A673 (cell line): ENCODE measurements at regions of chr12 and their contacts with region 1.

Region 1: DNA sequence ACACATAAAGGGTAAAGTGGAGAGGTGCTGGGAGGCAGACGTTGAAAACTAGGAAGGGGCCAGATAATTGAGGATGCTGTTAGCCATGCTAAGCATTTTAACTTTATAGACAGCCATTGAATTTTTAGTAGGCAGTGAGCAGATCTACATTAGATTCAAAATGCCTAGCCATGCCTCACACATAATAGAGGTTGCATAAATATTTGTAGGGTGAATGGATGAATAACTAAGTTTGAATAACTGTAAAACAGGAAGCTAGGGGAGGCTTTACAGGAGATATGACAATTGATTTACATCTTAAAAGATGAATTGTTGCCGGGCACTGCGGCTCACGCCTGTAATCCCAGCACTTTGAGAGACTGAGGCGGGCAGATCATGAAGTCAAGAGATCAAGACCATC is 12.3 kb upstream of the CCNT1 start:
- DNase-seq: no peak
- H3K4me3 ChIP-seq: no peak overlapping the region
- H3K27ac ChIP-seq: no peak overlapping the region
- H3K4me1 ChIP-seq: no peaks in the 10 kb centered on the region
- H3K27me3 ChIP-seq: no peaks in the 10 kb centered on the region
- CTCF ChIP-seq: no peak

Region 2: DNA sequence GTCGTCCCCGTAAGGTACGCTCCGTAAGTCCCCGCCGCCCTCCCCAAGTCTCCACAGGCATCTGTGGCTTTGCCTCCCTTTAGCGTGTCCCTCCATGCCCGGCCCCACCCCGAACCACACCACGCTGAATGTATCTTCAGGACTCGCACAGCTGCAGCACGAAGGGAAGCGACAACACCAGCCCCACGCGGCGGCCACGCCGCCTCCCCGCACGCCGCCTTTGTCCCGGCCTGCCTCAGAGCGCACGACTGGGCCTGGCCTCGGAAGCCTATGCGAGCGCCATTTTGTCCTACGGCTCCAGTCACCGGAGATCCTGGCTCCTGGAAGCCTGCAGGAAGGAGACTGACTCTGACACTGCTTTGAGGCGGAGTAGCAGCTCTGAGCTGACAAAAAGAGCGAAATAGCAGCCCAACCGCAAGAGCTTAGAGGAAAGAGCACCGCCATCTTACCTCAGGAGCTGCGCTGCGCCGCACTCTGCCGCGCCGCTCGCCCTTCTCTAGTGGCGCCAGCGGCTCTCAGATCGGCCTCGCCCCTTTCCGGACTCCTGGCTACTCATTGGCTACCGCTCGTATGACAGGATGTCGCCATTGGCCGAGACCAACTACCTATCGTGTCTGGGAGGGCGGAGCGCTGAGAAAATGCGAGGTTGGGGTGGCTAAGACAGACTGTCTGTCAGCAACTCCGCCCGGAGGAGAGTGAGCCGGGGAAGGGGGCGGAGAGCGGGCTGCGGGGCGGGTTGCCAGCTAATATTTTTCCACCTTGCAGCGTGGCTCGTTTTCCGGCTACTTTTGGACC is 46.9 kb before region 1 on chr12 and contains the start of gene KANSL2:
- CTCF ChIA-PET with region 1: no interaction called
- POLR2A ChIA-PET with region 1: interaction called, 21 read pairs
- intact Hi-C with region 1: no loop called
- DNase-seq: peak; percentile 100
- H3K4me3 ChIP-seq: peak within 1 kb of the TSS; percentile 76
- H3K27ac ChIP-seq: peak within 1 kb of the TSS; percentile 93
- H3K4me1 ChIP-seq: peaks cover 27% of the 10 kb centered on the region
- H3K27me3 ChIP-seq: no peaks in the 10 kb centered on the region
- CTCF ChIP-seq: no peak
- total RNA-seq, gene KANSL2: 46.9 and 51.4 TPM in 2 replicates

Region 3: GRCh38 chr12:48857278-48857994 is 128.6 kb after region 1 on chr12:
- CTCF ChIA-PET with region 1: no interaction called
- POLR2A ChIA-PET with region 1: interaction called, 20 read pairs
- intact Hi-C with region 1: no loop called
- DNase-seq: no peak
- H3K4me3 ChIP-seq: no peak overlapping the region
- H3K27ac ChIP-seq: no peak overlapping the region
- H3K4me1 ChIP-seq: peaks cover 6% of the 10 kb centered on the region
- H3K27me3 ChIP-seq: no peaks in the 10 kb centered on the region
- CTCF ChIP-seq: no peak

Region 4: DNA sequence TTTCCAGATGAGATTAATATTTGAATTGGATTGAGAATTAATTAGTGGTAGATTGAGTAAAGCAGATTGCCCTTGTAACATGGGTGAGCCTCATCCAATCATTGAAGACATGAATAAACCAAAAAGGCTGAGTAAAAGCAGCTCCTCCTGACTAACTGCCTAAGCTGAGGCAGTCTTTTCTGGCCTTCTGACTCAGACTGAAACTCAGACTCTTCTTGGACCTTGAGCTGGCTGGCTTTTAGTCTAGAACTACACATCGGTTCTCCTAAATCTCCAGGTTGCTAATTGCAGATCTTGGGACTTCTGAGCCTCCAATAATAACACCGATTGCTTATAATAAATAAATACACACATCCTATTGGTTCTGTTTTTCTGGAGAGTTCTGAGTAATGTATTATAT is 172.5 kb after region 1 on chr12:
- CTCF ChIA-PET with region 1: no interaction called
- POLR2A ChIA-PET with region 1: no interaction called
- intact Hi-C with region 1: no loop called
- DNase-seq: no peak
- H3K4me3 ChIP-seq: no peak overlapping the region
- H3K27ac ChIP-seq: no peak overlapping the region
- H3K4me1 ChIP-seq: no peaks in the 10 kb centered on the region
- H3K27me3 ChIP-seq: no peaks in the 10 kb centered on the region
- CTCF ChIP-seq: no peak